ENCODE measurements at regions of chr3 and their contacts with region 1.

Region 1: GRCh38 chr3:197256836-197257444 is 41.5 kb downstream of the DLG1 start:
- DNase-seq: peak in 2 of 4 donors; percentile 34 to 53
- ATAC-seq: peak; percentile 58
- H3K4me3 ChIP-seq: no peak overlapping the region
- H3K27ac ChIP-seq: no peak overlapping the region
- H3K4me1 ChIP-seq: no peaks in the 10 kb centered on the region
- H3K27me3 ChIP-seq: no peaks in the 10 kb centered on the region
- CTCF ChIP-seq: peak; percentile 50 to 52

Region 2: GRCh38 chr3:197511130-197511529 is 254.2 kb after region 1 on chr3:
- intact Hi-C with region 1: loop called in 1 of 2 experiments (anchors 5 kb)
- DNase-seq: no peak
- ATAC-seq: no peak
- H3K4me3 ChIP-seq: no peak overlapping the region
- H3K27ac ChIP-seq: no peak overlapping the region
- H3K4me1 ChIP-seq: peaks cover 0 to 12% of the 10 kb centered on the region in 2 donors
- H3K27me3 ChIP-seq: no peaks in the 10 kb centered on the region
- CTCF ChIP-seq: no peak